PC-3 (cell line): ENCODE measurements at regions of chr11 and their contacts with region 1.

Region 1: DNA sequence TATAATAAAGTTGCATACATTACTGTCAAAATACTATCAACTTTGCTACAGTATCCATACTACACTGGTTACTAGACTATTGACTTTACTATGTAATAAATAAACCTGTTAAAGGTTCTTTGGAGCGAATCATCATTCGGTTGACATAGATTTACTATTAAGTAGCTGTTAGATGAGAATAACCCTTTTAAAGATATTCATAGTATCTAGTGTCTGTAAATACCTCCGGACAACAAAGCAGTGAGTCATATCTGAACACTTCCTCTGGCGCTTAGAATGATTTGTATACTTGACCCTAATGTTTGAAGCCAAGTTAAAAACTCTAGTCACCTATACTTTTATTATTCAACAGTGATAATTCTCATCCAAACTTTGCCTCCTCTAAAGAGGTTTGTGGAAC is 84.7 kb downstream of the MSANTD4 start:
- DNase-seq: peak; percentile 86
- ATAC-seq: peak; percentile 83
- H3K4me3 ChIP-seq: no peak overlapping the region
- H3K27ac ChIP-seq: peak overlapping the region; percentile 31
- H3K4me1 ChIP-seq: peaks cover 32% of the 10 kb centered on the region
- H3K27me3 ChIP-seq: no peaks in the 10 kb centered on the region
- CTCF ChIP-seq: no peak

Region 2: GRCh38 chr11:105910095-105910715 is 27.1 kb before region 1 on chr11:
- CTCF ChIA-PET with region 1: no interaction called
- POLR2A ChIA-PET with region 1: no interaction called
- intact Hi-C with region 1: loop called (anchors 1 kb)
- DNase-seq: peak; percentile 91
- ATAC-seq: peak; percentile 99
- H3K4me3 ChIP-seq: no peak overlapping the region
- H3K27ac ChIP-seq: peak overlapping the region; percentile 10; the same call in 1 of the 2 replicates
- H3K4me1 ChIP-seq: peaks cover 17% of the 10 kb centered on the region
- H3K27me3 ChIP-seq: no peaks in the 10 kb centered on the region
- CTCF ChIP-seq: no peak

Region 3: DNA sequence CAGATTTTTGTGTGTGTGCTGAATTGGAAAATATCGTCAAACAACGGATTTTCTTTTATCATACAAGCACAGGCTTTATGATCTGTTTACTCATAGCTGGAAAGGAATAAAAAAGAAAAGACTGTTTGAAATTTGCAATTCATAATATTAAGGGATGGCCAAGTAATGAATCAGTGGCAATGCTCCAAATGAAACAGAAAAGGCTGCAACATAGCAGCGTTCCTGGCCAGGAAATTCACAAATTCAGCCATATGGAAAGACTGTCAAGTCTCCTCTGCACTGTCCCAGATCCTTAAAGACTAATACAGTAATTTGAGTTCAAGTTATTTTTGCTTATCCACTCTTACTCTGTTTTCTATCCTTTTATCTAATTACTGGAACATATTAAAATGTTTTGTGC is 13.5 kb before region 1 on chr11:
- CTCF ChIA-PET with region 1: no interaction called
- POLR2A ChIA-PET with region 1: no interaction called
- intact Hi-C with region 1: loop called (anchors 1 kb)
- DNase-seq: peak; percentile 80
- ATAC-seq: peak; percentile 95
- H3K4me3 ChIP-seq: 0 out of 2 replicates have a peak overlapping the region, but pooled peaks have one; percentile 2
- H3K27ac ChIP-seq: no peak overlapping the region
- H3K4me1 ChIP-seq: peaks cover 13% of the 10 kb centered on the region
- H3K27me3 ChIP-seq: no peaks in the 10 kb centered on the region
- CTCF ChIP-seq: no peak

Region 4: GRCh38 chr11:105975128-105975527 is 37.8 kb after region 1 on chr11:
- CTCF ChIA-PET with region 1: no interaction called
- POLR2A ChIA-PET with region 1: no interaction called
- intact Hi-C with region 1: no loop called
- DNase-seq: peak; percentile 18
- ATAC-seq: peak; percentile 27; the same call in 1 of the 2 replicates
- H3K4me3 ChIP-seq: no peak overlapping the region
- H3K27ac ChIP-seq: no peak overlapping the region
- H3K4me1 ChIP-seq: no peaks in the 10 kb centered on the region
- H3K27me3 ChIP-seq: no peaks in the 10 kb centered on the region
- CTCF ChIP-seq: no peak

Region 5: GRCh38 chr11:106021967-106022794 is 84.8 kb after region 1 on chr11 and contains the start of gene MSANTD4:
- CTCF ChIA-PET with region 1: no interaction called
- POLR2A ChIA-PET with region 1: no interaction called
- intact Hi-C with region 1: loop called (anchors 5 kb)
- DNase-seq: peak; percentile 100
- ATAC-seq: peak; percentile 97
- H3K4me3 ChIP-seq: peak within 1 kb of the TSS; percentile 91
- H3K27ac ChIP-seq: peak within 1 kb of the TSS; percentile 9; the same call in 1 of the 2 replicates
- H3K4me1 ChIP-seq: peaks cover 28% of the 10 kb centered on the region
- H3K27me3 ChIP-seq: no peaks in the 10 kb centered on the region
- CTCF ChIP-seq: no peak
- total RNA-seq, gene MSANTD4: 18.0 and 33.7 TPM in 2 replicates